ENCODE measurements at regions of chr2 and their contacts with region 1.

Region 1: DNA sequence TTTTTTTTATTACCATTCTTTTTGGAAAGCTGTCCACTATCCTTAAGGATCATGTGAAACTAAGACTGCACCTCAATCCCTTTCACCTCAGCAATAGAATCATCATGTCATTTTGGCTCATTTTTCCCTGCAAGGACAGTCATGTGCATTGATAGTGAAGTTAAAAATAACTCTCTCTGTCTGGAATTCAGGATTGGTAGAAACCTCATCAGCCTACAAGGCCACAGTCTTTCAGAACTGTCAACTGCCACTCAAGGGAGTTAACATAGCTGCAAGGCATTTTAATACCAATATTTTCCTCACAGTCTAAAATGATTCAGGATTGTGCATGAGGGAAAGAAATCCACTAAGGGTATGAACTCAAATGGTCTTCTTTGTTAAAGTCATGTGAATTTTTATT is 201.5 kb upstream of the KCNJ3 start:
- DNase-seq: no peak
- H3K4me3 ChIP-seq: no peak overlapping the region
- H3K27ac ChIP-seq: no peak overlapping the region
- H3K4me1 ChIP-seq: no peaks in the 10 kb centered on the region
- CTCF ChIP-seq: no peak

Region 2: DNA sequence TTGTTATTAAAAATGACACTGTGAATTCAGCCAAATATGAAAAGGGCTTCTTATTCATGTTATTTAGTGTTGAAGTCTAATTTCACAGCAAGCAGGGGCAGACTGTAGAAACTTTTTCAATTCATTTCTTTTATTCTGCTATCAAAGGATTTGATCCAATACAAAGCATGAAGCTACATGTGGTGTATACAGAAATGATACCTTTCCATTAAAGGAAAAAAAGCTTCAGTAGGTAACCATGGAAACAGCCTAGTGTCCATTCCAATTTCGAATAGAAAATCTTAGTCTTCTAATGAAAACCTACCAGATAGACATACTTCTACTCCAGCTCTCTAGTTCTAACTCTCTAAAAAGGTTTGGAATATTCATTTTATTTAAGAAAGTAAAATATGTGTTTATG is 74.8 kb before region 1 on chr2:
- CTCF ChIA-PET with region 1: no interaction called
- POLR2A ChIA-PET with region 1: interaction called, 10 read pairs
- intact Hi-C with region 1: no loop called
- DNase-seq: no peak
- H3K4me3 ChIP-seq: no peak overlapping the region
- H3K27ac ChIP-seq: no peak overlapping the region
- H3K4me1 ChIP-seq: no peaks in the 10 kb centered on the region
- CTCF ChIP-seq: no peak

Region 3: GRCh38 chr2:154466226-154466625 is 30.8 kb before region 1 on chr2:
- CTCF ChIA-PET with region 1: no interaction called
- POLR2A ChIA-PET with region 1: no interaction called
- intact Hi-C with region 1: no loop called
- DNase-seq: no peak
- H3K4me3 ChIP-seq: no peak overlapping the region
- H3K27ac ChIP-seq: no peak overlapping the region
- H3K4me1 ChIP-seq: no peaks in the 10 kb centered on the region
- CTCF ChIP-seq: no peak

Measured in OCI-LY7 (cell line).